Activated T-helper 1 cell treated with anti-CD3 and anti-CD28 coated beads, Interleukin-12 subunit alpha, Interleukin-12 subunit beta, Interleukin-2, Interleukin-4 antibody, amounts not matched to agents 30 ng/mL and 10 ng/mL and 1 ng/mL, durations not matched to agents 14 hours and 24 hours and 36 hours (primary cell): ENCODE measurements at regions of chr1 and their contacts with region 1.

Region 1: GRCh38 chr1:174968750-174969244 is 30.9 kb upstream of the CACYBP start:
- DNase-seq: peak; percentile 41
- H3K4me3 Mint-ChIP-seq: peak overlapping the region; percentile 70
- H3K27ac Mint-ChIP-seq: peak overlapping the region; percentile 96
- H3K4me1 Mint-ChIP-seq: peaks cover 72% of the 10 kb centered on the region
- H3K27me3 Mint-ChIP-seq: no peaks in the 10 kb centered on the region

Region 2: GRCh38 chr1:173867753-173868265 is 1101.0 kb before region 1 on chr1 and contains the start of gene GAS5:
- intact Hi-C with region 1: loop called (anchors 1 kb)
- DNase-seq: peak; percentile 99
- H3K4me3 Mint-ChIP-seq: peak within 1 kb of the TSS; percentile 98
- H3K27ac Mint-ChIP-seq: peak within 1 kb of the TSS; percentile 98
- H3K4me1 Mint-ChIP-seq: peaks cover 66% of the 10 kb centered on the region
- H3K27me3 Mint-ChIP-seq: no peaks in the 10 kb centered on the region
- total RNA-seq, gene GAS5: 653 and 688 TPM in 2 replicates

Region 3: DNA sequence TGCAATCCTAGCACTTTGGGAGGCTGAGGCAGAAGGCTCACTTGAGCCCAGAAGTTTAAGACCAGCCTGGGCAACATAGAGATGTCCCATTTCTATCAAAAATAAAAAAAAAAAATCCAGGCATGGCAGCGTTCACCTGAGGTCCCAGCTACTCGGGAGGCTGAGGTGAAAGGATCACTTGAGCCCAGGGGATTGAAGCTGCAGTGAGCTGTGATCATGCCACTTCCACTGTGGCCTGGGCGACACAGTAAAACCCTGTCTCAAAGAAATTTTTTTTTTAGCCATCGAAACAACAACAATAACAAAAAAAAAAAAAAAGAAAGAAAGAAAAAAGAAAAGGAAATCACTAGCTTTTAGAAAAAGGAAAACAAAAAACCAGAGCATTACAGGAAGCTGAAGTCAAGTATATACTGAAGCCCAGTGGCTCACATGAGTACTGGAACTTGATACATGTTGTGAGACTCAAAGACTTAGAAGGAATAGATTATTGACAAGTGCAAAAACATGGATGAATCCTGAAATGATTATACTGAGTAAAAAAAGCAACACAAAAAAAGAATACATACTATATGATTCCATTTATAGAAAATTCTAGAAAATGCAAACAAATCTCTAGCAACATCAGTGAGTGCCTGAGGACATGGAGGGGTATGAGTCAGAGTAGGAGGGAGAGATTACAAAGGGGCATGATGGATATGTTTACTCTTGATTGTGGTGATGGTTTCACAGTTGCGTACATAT is 815.5 kb before region 1 on chr1:
- intact Hi-C with region 1: loop called (anchors 1 kb)
- DNase-seq: no peak
- H3K4me3 Mint-ChIP-seq: no peak overlapping the region
- H3K27ac Mint-ChIP-seq: peak overlapping the region; percentile 66
- H3K4me1 Mint-ChIP-seq: peaks cover 48% of the 10 kb centered on the region
- H3K27me3 Mint-ChIP-seq: no peaks in the 10 kb centered on the region

Region 4: DNA sequence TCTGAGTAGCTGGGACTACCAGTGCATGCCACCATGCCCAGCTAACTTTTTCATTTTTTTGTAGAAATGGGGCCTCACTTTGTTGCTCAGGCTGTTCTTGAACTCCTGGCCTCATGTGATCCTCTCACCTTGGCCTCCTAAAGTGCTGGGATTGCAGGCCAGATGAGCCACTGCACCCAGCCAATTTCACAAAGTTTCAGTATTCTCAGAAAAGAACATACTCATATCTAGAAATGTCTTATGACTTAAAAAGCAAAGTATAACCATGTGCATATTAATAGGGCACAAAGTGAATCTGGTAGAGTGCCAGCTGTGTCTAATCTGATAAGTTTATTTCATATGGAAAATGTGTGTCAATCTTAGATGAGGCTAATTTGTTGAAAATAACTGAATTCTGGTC is 56.5 kb before region 1 on chr1:
- intact Hi-C with region 1: loop called (anchors 1 kb)
- DNase-seq: no peak
- H3K4me3 Mint-ChIP-seq: no peak overlapping the region
- H3K27ac Mint-ChIP-seq: peak overlapping the region; percentile 27
- H3K4me1 Mint-ChIP-seq: peaks cover 27% of the 10 kb centered on the region
- H3K27me3 Mint-ChIP-seq: no peaks in the 10 kb centered on the region

Region 5: GRCh38 chr1:174982971-174983689 is 14.3 kb after region 1 on chr1:
- intact Hi-C with region 1: loop called (anchors 1 kb)
- DNase-seq: no peak
- H3K4me3 Mint-ChIP-seq: no peak overlapping the region
- H3K27ac Mint-ChIP-seq: no peak overlapping the region
- H3K4me1 Mint-ChIP-seq: peaks cover 28% of the 10 kb centered on the region
- H3K27me3 Mint-ChIP-seq: no peaks in the 10 kb centered on the region

Region 6: GRCh38 chr1:175023043-175023921 is 54.5 kb after region 1 on chr1 and contains the start of gene MRPS14:
- intact Hi-C with region 1: loop called (anchors 1 kb)
- DNase-seq: peak; percentile 95
- H3K4me3 Mint-ChIP-seq: peak within 1 kb of the TSS; percentile 95
- H3K27ac Mint-ChIP-seq: peak within 1 kb of the TSS; percentile 93
- H3K4me1 Mint-ChIP-seq: peaks cover 19% of the 10 kb centered on the region
- H3K27me3 Mint-ChIP-seq: no peaks in the 10 kb centered on the region
- total RNA-seq, gene MRPS14: 29.2 and 29.9 TPM in 2 replicates